ENCODE measurements at regions of chr19 and their contacts with region 1.

Region 1: GRCh38 chr19:3429581-3430080 is 50.7 kb downstream of the SMIM24 start:
- DNase-seq: peak; percentile 88 to 96 (median 93)
- ATAC-seq: peak; percentile 80 to 89 (median 84)
- H3K4me3 ChIP-seq: no peak overlapping the region
- H3K27ac ChIP-seq: peak overlapping the region; percentile 39 to 94 (median 86)
- H3K4me1 ChIP-seq: peaks cover 7 to 57% (median 35%) of the 10 kb centered on the region in 12 donors
- H3K27me3 ChIP-seq: no peaks in the 10 kb centered on the region
- CTCF ChIP-seq: peak; percentile 99 to 100 (median 99)
- POLR2A ChIP-seq: peak in 1 of 2 donors; percentile 23

Region 2: DNA sequence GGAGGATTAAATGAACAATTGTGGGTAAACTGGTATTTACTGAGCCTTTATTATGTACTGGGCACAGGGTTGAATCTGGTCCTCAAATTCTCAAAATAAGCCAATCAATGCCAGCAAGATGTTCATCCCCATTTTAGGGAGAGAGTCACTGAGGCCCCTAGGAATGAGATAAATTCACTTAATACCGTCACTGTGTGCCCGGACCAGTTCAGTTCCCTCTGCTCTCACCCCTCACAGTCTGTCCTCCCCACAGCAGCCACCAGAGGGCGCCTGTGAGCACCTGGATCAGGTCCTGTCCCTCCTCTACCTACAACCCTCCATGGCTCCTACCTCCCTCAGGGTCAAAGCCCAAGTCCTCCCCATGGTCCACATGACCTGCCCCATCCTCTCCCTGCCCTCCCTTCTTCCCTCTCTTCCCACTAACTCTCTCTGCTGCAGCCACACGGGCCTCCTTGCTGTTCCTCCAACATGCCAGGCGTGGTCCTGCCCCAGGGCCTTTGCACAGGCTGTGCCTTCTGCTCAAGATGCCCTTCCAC is 105.2 kb before region 1 on chr19:
- intact Hi-C with region 1: loop called in 9 of 10 experiments (anchors 2 to 5 kb)
- DNase-seq: peak in 3 of 5 donors; percentile 28 to 78 (median 44)
- ATAC-seq: peak in 3 of 4 donors; percentile 47 to 49 (median 48)
- H3K4me3 ChIP-seq: no peak overlapping the region
- H3K27ac ChIP-seq: no peak overlapping the region
- H3K4me1 ChIP-seq: no peaks in the 10 kb centered on the region
- H3K27me3 ChIP-seq: peaks cover 8 to 24% (median 17%) of the 10 kb centered on the region in 9 donors
- CTCF ChIP-seq: peak; percentile 45 to 71 (median 60)
- POLR2A ChIP-seq: no peak

Region 3: DNA sequence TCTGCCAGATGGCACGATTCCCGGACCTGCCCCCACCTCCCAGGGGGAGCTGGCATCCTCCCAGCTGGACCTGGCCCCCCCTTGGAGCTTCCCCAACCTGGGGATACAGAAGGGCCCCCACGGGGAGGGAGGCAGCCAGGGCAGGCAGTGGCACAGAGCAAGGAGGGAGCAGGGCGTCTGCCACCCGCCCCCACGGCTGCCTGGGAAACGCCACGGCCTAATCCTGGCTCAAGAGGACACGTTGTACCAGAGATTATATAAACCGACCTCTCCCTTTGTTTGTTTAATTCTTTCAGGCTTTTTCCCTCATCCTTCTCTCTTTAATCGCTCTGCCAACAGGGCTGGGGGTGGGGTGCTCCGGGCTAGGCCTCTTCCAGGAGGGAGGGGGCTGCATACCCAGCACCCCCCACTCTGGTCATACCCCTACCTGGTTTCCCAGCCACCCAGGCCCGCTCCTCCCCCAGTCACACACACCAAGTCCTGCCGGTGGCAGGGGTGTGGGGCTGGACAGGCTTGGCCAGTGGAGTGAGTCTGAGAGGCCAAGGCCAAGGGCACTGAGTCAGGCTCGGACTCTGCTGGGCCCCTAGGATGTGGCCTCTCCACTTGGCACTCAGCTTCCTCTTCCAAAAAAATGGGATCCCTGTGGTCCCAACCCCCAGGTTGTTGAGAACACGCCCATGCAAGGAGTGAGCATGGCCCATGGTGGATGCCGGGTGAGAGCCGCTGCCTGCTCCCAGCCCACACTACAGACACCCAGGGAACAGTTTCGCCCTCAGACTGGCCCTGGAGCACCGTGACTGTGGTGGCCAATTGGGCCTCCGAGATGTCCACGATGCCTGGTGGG is 92.7 kb before region 1 on chr19:
- intact Hi-C with region 1: loop called in 4 of 10 experiments (anchors 5 kb)
- DNase-seq: peak; percentile 85 to 96 (median 89)
- ATAC-seq: peak; percentile 91 to 96 (median 95)
- H3K4me3 ChIP-seq: no peak overlapping the region
- H3K27ac ChIP-seq: peak overlapping the region; percentile 84 to 99 (median 92)
- H3K4me1 ChIP-seq: peaks cover 5 to 44% (median 33%) of the 10 kb centered on the region in 12 donors
- H3K27me3 ChIP-seq: no peaks in the 10 kb centered on the region
- CTCF ChIP-seq: no peak
- POLR2A ChIP-seq: no peak

Region 4: GRCh38 chr19:3343619-3344502 is 85.8 kb before region 1 on chr19:
- intact Hi-C with region 1: loop called in 5 of 10 experiments (anchors 5 kb)
- DNase-seq: peak; percentile 81 to 90 (median 88)
- ATAC-seq: peak; percentile 65 to 86 (median 84)
- H3K4me3 ChIP-seq: peak overlapping the region in 10 of 12 donors; percentile 6 to 46 (median 32)
- H3K27ac ChIP-seq: peak overlapping the region in 11 of 12 donors; percentile 53 to 90 (median 66)
- H3K4me1 ChIP-seq: peaks cover 0 to 32% (median 18%) of the 10 kb centered on the region in 12 donors
- H3K27me3 ChIP-seq: no peaks in the 10 kb centered on the region
- CTCF ChIP-seq: peak in 4 of 12 donors; percentile 7 to 38 (median 15)
- POLR2A ChIP-seq: no peak

Region 5: GRCh38 chr19:3360421-3361383 is 68.9 kb before region 1 on chr19:
- intact Hi-C with region 1: loop called in 8 of 10 experiments (anchors 1 to 5 kb)
- DNase-seq: peak; percentile 76 to 90 (median 86)
- ATAC-seq: peak; percentile 55 to 80 (median 65)
- H3K4me3 ChIP-seq: peak overlapping the region; percentile 57 to 100 (median 97)
- H3K27ac ChIP-seq: peak overlapping the region; percentile 89 to 100 (median 98)
- H3K4me1 ChIP-seq: peaks cover 5 to 58% (median 34%) of the 10 kb centered on the region in 12 donors
- H3K27me3 ChIP-seq: peaks cover 0 to 3% (median 0%) of the 10 kb centered on the region in 9 donors
- CTCF ChIP-seq: peak in 7 of 12 donors; percentile 11 to 52 (median 37)
- POLR2A ChIP-seq: peak in 1 of 2 donors; percentile 67

Region 6: GRCh38 chr19:3403489-3404323 is 25.9 kb before region 1 on chr19:
- intact Hi-C with region 1: loop called in 4 of 10 experiments (anchors 1 to 2 kb)
- DNase-seq: peak; percentile 91 to 96 (median 95)
- ATAC-seq: peak; percentile 75 to 83 (median 80)
- H3K4me3 ChIP-seq: peak overlapping the region in 11 of 12 donors; percentile 8 to 63 (median 47)
- H3K27ac ChIP-seq: peak overlapping the region; percentile 95 to 100 (median 100)
- H3K4me1 ChIP-seq: peaks cover 9 to 91% (median 52%) of the 10 kb centered on the region in 12 donors
- H3K27me3 ChIP-seq: no peaks in the 10 kb centered on the region
- CTCF ChIP-seq: no peak
- POLR2A ChIP-seq: no peak

Region 7: DNA sequence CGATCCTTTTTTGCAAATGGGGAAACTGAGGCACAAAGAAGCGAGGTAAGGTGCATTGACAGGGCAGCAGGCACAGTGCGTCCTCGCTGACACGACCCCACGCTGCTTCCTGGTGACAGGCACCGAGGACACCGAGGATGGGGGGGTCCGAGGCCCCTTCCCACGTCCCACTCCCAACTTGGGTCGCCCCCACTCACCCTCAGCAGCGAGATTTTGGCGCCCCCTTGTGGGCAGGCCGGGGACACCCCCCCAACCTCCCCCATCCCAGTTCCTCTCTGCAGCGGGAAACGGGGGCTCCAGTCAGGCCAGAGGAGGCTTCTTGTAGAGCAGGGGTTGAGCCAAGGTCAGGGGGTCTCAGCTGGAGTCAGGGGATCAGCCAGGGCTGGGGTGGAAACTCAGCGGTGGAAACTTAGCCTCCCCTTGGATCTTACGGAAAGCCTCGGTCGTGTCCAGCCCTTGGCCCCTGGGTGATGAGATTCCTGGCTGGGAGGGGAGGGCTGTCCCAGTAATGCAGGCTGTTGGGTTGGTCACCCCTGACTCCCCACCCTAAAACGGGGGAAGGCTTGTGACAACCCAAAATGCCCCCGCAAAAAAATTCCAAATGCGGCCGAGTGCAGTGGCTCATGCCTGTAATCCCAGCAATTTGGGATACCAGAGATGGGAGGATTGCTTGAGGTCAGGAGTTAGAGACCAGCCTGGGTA is 42.5 kb after region 1 on chr19:
- intact Hi-C with region 1: loop called in 5 of 10 experiments (anchors 5 kb)
- DNase-seq: peak in 2 of 5 donors; percentile 42 to 48
- ATAC-seq: peak; percentile 41 to 64 (median 58)
- H3K4me3 ChIP-seq: no peak overlapping the region
- H3K27ac ChIP-seq: no peak overlapping the region
- H3K4me1 ChIP-seq: peaks cover 0 to 27% (median 9%) of the 10 kb centered on the region in 12 donors
- H3K27me3 ChIP-seq: peaks cover 0 to 7% (median 0%) of the 10 kb centered on the region in 9 donors
- CTCF ChIP-seq: peak; percentile 73 to 94 (median 88)
- POLR2A ChIP-seq: no peak

Measured in heart left ventricle (tissue), 16 donors.